ENCODE measurements at regions of chr22 and their contacts with region 1.

Region 1: GRCh38 chr22:38353142-38353629 is 36.0 kb upstream of the CSNK1E start:
- DNase-seq: peak; percentile 67
- ATAC-seq: peak; percentile 96
- H3K4me3 Mint-ChIP-seq: no peak overlapping the region
- H3K27ac Mint-ChIP-seq: no peak overlapping the region
- H3K4me1 Mint-ChIP-seq: no peaks in the 10 kb centered on the region
- H3K27me3 Mint-ChIP-seq: no peaks in the 10 kb centered on the region
- CTCF ChIP-seq: peak; percentile 98

Region 2: GRCh38 chr22:38298312-38299000 is 54.7 kb before region 1 on chr22:
- CTCF ChIA-PET with region 1: interaction called, 4 read pairs
- POLR2A ChIA-PET with region 1: no interaction called
- intact Hi-C with region 1: loop called (anchors 10 kb)
- DNase-seq: peak; percentile 63
- ATAC-seq: peak; percentile 79
- H3K4me3 Mint-ChIP-seq: no peak overlapping the region
- H3K27ac Mint-ChIP-seq: no peak overlapping the region
- H3K4me1 Mint-ChIP-seq: no peaks in the 10 kb centered on the region
- H3K27me3 Mint-ChIP-seq: no peaks in the 10 kb centered on the region
- CTCF ChIP-seq: peak; percentile 67